ENCODE measurements at regions of chr19 and their contacts with region 1.

Region 1: DNA sequence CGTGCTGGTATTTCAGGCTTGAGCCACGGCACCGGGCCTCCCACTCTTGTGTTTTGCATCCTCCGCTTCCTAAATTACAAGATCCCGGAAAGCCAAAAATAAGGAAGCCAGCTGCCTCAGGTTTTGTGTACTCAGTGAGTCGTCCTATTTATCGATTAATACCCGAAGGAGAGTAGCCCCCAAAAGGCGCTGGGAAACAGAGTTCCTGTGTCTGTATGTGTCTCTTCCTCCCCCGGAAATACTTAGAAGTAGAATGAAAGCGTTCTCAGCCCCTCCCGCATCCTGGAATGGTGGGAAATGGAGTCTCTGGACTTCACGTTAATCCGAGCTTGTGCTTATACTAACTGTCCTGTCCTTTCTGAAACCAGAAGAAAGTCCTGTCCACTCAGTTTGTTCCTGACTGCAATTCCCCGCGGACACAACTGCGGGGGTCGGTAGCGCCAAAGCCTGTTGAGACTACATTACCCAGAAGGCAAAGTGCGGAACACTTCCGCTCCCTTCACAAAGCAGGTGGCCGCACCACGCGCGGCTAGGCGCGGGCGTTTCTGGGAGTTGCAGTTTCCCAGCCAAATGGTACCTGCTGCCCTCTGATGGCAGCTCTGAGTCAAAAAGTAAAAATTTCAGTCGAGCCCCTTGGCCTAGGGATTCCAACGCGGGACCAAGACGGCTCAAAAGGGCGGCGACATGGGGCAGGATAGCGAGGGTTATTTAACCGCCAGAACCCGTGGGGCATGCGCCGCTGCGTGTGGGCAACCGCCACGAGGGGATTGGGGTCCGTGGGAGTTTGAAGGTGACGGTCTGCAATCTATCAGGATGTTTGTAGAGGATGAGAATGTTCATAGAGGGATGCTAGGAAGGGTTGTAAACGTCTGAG is 2.2 kb upstream of the GSK3A start:
- H3K4me3 ChIP-seq: peak overlapping the region; percentile 38
- H3K27ac ChIP-seq: peak overlapping the region; percentile 99
- H3K4me1 ChIP-seq: peaks cover 18% of the 10 kb centered on the region
- CTCF ChIP-seq: peak; percentile 95

Region 2: GRCh38 chr19:42108527-42109389 is 135.8 kb before region 1 on chr19:
- CTCF ChIA-PET with region 1: interaction called, 37 read pairs
- POLR2A ChIA-PET with region 1: interaction called, 7 read pairs
- H3K4me3 ChIP-seq: no peak overlapping the region
- H3K27ac ChIP-seq: no peak overlapping the region
- H3K4me1 ChIP-seq: peaks cover under 1% of the 10 kb centered on the region; the same call in 1 of the 2 replicates
- CTCF ChIP-seq: peak; percentile 100

Region 3: DNA sequence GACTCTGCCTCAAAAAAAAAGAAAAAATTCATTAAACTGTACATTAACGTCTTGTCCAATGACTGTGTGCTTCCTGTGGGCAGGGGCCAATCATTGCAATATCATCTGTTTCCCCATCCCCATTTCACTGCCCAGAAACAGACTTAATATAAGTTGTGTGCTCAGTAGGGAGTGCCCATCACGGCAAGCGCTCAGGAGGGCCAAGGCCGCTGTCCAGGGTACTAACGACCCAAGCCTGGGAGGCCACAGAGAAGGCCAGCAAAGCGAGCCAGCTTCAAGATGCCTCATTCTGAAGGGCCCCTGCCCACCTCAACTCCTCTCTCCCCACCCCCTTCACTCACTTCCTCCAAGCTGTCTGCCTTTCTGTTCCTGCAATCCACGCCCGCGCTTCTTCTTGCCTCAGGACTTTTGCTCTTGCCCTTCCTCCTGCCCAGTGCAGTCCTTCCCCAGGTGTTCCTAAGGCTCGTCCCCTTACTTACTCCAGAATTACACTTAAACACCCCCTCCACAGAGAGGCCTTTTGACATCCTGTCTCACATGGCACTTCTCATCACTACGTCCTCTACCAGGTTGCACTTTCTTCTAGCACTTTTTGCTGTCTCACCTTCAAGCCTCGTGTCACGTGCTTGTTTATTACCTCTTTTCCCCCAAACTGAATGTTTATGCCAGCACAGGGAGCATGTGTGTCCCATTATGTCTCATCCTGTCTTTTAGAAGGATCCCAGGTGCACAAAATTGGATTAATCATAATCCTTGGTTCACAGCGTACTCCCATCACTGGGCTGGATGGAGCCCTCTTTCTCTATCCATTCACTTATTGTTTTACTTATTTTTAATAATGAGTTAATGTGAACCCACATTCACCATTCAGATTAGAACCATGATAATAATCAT is 101.0 kb before region 1 on chr19:
- CTCF ChIA-PET with region 1: no interaction called
- POLR2A ChIA-PET with region 1: no interaction called
- H3K4me3 ChIP-seq: no peak overlapping the region
- H3K27ac ChIP-seq: no peak overlapping the region
- H3K4me1 ChIP-seq: no peaks in the 10 kb centered on the region
- CTCF ChIP-seq: no peak

Region 4: DNA sequence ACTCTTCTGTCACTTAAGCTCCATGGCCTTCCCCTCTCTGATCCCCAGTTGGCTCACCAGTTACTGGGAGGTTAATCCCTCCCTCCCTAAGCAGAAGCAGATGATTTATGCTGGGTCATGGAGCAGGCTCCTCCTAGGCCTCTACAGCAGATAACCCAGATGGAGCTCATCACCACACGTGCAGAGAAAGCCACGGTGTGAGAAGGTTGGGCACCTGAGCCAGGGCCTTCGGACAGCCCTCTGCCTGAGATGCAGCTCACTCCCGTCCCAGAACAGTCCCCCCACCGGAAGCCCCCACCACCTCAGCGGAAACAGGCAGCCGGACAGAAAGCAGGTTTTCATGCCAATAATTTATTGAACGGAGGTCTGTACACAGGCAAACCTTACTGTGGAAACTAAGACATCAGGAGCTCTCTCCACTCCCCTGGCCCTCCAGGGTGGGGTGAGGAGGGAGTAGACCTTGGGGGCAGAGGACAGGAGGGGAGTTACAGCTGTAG is 14.7 kb before region 1 on chr19:
- CTCF ChIA-PET with region 1: interaction called, 6 read pairs
- POLR2A ChIA-PET with region 1: interaction called, 36 read pairs
- H3K4me3 ChIP-seq: no peak overlapping the region
- H3K27ac ChIP-seq: peak overlapping the region; percentile 34; the same call in 1 of the 2 replicates
- H3K4me1 ChIP-seq: no peaks in the 10 kb centered on the region
- CTCF ChIP-seq: no peak

Region 5: GRCh38 chr19:42283143-42284065 is 38.8 kb after region 1 on chr19:
- CTCF ChIA-PET with region 1: interaction called, 276 read pairs
- POLR2A ChIA-PET with region 1: interaction called, 242 read pairs
- H3K4me3 ChIP-seq: peak overlapping the region; percentile 39
- H3K27ac ChIP-seq: peak overlapping the region; percentile 90
- H3K4me1 ChIP-seq: peaks cover 51% of the 10 kb centered on the region
- CTCF ChIP-seq: peak; percentile 84

Region 6: GRCh38 chr19:42301656-42302203 is 57.1 kb after region 1 on chr19 and contains the start of gene PRR19:
- CTCF ChIA-PET with region 1: interaction called, 55 read pairs
- POLR2A ChIA-PET with region 1: interaction called, 31 read pairs
- H3K4me3 ChIP-seq: peak within 1 kb of the TSS; percentile 57
- H3K27ac ChIP-seq: peak within 1 kb of the TSS; percentile 75; the same call in 1 of the 2 replicates
- H3K4me1 ChIP-seq: peaks cover 13% of the 10 kb centered on the region
- CTCF ChIP-seq: no peak

Region 7: GRCh38 chr19:42396381-42397262 is 152.0 kb after region 1 on chr19:
- CTCF ChIA-PET with region 1: interaction called, 4 read pairs
- POLR2A ChIA-PET with region 1: interaction called, 11 read pairs
- H3K4me3 ChIP-seq: peak overlapping the region; percentile 61
- H3K27ac ChIP-seq: peak overlapping the region; percentile 91
- H3K4me1 ChIP-seq: peaks cover 13% of the 10 kb centered on the region
- CTCF ChIP-seq: no peak

Measured in HEK293 (cell line).